GM10248 (cell line): ENCODE measurements at regions of chr1 and their contacts with region 1.

Region 1: GRCh38 chr1:209747580-209748262 is 8.1 kb upstream of the TRAF3IP3 start:
- DNase-seq: peak; percentile 82
- CTCF ChIP-seq: peak; percentile 81

Region 2: DNA sequence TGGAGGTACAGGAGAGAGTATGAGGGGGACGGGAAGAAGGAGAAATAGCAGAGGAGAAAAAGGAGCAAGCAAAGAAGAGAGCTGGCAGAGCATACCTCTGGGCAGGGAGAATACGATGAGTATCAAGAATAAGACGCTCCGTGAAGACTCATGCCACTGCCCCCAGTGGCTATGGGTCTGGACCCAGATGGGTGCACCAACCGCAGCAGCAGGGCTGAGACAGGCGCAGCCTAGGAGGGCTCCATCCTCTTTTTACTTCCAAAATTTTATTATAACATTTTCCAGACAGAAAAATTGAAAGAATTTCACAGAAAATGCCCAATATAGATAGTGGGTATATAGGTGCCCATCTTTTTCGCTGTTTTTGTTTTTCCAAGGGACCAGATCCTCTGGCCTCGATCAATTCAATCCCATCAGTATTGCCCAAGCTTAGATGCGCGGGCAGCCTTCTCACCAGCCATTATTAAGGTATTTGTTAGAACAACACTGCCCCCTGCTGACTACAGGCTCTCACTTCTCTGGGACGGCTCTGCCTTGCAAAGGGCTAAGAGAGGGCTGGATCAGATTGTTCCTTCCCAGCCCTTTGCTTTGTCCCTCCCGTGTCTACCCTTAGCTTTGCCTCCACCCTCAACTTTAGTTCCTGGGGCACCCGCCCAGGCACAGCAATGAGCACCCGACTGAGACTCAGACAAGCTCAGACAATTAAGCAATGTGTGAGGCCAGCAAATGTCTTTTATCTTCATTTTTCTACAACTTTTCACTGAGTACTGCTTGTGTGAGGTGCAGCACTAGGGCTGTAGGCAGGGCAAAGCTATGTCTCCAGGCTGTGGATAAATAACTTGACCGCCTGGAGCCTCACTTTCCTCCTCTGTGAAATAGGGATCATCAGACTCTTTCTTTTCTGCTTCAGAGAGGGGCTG is 181.7 kb before region 1 on chr1:
- CTCF ChIA-PET with region 1: interaction called, 42 read pairs
- POLR2A ChIA-PET with region 1: no interaction called
- DNase-seq: peak; percentile 70
- CTCF ChIP-seq: peak; percentile 78

Region 3: GRCh38 chr1:209590405-209590804 is 157.3 kb before region 1 on chr1:
- CTCF ChIA-PET with region 1: no interaction called
- POLR2A ChIA-PET with region 1: no interaction called
- DNase-seq: no peak
- CTCF ChIP-seq: no peak

Region 4: GRCh38 chr1:209627732-209628196 is 120.0 kb before region 1 on chr1:
- CTCF ChIA-PET with region 1: interaction called, 11 read pairs
- POLR2A ChIA-PET with region 1: no interaction called
- DNase-seq: peak; percentile 86
- CTCF ChIP-seq: peak; percentile 99

Region 5: DNA sequence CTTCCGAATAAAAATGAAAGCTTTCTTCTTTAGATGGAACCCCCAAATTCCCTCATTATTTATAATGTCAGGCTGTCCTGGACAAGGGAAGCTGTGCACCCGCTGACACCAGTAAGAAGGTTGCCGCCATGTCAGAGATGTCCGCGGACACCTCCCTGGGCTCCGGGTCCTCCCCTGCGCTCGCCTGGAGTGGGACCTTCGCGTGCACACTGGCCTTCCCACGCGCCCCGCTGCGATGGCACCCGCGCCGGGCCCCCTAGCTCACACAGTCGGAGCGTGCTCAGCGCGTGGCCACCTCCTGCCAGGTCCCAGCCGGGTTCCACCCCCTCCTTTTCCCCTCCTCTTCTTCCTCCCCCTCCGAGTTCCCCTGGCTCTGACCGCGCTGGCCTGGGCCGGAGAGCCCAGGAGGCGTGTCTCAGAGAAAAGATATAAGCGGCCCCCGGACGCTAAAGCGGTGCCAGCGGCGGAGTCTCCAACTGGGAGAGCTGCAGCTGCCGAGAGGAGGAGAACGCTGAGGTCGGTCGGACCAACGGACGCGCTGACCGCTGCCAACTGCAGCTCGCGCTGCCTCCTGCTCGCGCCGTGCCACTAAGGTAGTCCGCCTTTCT is 72.7 kb before region 1 on chr1 and contains the start of gene G0S2:
- CTCF ChIA-PET with region 1: interaction called, 22 read pairs
- POLR2A ChIA-PET with region 1: no interaction called
- DNase-seq: no peak
- CTCF ChIP-seq: no peak

Region 6: DNA sequence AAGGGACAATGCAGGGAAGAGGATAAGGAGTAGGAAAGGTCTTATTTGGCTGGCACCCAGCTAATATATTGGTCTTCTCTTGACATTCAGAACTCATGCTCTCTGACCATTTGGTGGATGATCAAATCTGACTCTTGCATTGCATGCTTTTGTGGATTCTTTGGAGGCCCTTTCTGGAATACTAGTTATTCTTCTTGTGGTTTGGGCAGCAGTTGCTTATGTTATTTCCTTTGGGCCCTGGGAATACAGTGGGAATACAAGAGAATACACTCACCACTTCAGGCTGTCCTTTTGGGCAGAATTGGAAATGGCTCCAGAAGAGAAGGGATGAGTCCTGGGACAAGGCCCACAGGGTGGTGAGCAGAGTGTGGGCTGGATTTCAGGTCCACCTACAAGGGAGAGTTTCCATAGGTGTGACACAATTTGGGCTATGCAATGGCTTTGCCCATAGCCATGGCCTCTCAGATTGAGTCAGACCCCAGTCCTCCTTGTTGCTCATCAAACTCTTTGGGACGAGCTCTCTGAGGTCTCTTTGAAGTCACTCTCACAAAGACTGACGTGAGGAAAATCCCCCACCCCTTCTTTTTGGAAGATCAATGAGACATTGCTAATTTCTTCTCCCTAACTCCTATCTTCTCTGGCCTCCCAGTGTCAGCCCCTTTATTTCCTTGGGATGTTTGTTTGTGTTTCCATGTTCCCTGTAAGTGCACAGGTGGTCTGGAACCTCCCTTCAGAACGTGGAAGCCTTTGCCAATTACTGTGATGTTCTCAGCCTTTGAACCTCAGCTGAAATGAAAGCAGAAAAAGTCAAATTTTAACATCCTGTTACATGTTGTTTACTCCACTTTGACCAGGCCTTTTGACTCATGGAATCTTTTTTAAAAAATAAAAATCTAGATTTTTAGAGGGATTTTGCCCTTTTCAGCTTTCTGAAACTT is 23.7 kb before region 1 on chr1:
- CTCF ChIA-PET with region 1: interaction called, 34 read pairs
- POLR2A ChIA-PET with region 1: no interaction called
- DNase-seq: peak; percentile 27
- CTCF ChIP-seq: no peak

Region 7: DNA sequence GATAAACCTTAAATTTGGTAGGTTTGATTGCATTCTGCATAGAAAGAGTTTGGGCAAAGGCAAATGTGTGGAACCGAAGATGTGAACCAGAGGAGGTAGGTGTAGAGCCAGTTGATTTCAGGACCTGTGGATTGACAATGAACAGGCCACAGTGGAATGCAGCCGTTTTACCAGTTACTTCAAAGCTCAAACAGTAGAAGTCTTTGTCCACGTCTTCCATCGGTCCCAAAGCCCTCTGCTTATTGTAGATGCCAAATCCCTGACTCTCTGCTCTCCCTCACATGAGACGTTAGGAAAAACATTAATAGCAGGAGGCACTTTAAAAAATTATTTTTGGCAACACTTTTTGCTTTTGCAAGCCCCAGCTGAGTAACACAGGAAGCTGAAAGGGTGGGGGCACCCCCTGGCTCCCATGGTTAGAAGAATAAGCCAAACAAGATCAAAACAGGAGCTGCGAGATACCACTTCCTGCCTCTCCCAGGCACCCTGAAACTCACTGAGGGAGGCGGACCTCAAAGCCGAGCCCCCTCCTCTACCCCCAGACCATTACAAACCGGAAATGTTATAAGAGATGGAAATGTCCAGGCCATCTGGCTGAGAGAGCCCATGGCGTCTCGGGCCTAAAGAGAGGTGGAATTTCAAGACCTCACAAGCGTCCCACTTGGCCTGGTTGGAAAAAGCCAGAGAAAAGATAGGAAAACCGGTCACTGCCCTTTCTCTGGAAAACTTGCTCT is 21.6 kb after region 1 on chr1:
- CTCF ChIA-PET with region 1: interaction called, 40 read pairs
- POLR2A ChIA-PET with region 1: no interaction called
- DNase-seq: peak; percentile 74
- CTCF ChIP-seq: no peak

Region 8: GRCh38 chr1:209827384-209828262 is 79.9 kb after region 1 on chr1 and contains the start of gene UTP25:
- CTCF ChIA-PET with region 1: interaction called, 23 read pairs
- POLR2A ChIA-PET with region 1: no interaction called
- DNase-seq: peak; percentile 89
- CTCF ChIP-seq: peak; percentile 63

Region 9: DNA sequence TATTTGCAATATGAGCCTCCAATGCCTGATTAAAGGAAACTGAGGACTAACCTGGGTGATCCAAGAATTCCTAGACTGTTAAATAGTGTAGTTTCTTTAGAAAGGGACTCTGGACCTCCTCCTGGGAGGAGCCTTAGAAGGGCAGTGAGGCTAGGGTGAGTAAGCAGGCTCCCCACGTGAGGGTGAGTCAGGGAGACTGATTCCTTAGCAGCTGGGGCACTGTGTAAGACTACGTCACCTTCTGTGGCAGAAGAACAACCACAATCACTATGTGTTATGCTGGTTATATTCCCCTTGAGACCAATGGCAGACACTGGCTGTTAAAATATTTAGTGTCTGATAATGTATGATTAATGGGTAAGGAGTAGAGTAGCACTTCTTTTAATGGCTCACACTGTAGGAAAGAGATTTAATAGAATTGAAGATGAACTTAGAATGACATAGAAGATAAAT is 137.0 kb after region 1 on chr1:
- CTCF ChIA-PET with region 1: no interaction called
- POLR2A ChIA-PET with region 1: no interaction called
- DNase-seq: peak; percentile 32
- CTCF ChIP-seq: no peak

Region 10: DNA sequence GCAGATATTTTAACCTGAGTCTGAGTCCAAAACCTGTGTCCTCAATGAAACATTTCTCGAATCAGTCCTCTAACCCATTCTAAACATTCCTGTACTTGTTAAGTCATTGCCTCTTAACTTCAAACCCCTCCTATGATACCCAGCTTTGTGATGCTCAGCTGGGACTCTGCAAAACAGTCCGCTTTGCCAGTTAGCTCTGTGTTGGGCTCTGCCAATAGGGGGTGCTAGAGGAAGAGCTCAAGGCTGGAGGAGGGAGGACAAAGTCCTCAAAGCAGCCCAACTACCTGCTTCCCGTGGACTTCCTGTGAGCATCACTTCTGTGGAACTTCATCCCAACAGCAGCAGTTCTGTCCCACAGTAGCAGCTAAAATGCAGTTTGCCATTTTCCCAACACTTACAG is 152.2 kb after region 1 on chr1:
- CTCF ChIA-PET with region 1: no interaction called
- POLR2A ChIA-PET with region 1: no interaction called
- DNase-seq: peak; percentile 37
- CTCF ChIP-seq: peak; percentile 24